ENCODE measurements at regions of chr3 and their contacts with region 1.

Region 1: GRCh38 chr3:4466741-4467521 is at the start of gene SUMF1:
- DNase-seq: peak; percentile 72 to 84
- ATAC-seq: peak; percentile 94 to 99 (median 94)
- H3K4me3 ChIP-seq: peak within 1 kb of the TSS; percentile 84
- H3K4me3 Mint-ChIP-seq: peak within 1 kb of the TSS; percentile 87
- H3K27ac ChIP-seq: peak within 1 kb of the TSS; percentile 71
- H3K27ac Mint-ChIP-seq: peak within 1 kb of the TSS; percentile 78 to 89
- H3K4me1 ChIP-seq: peaks cover 8% of the 10 kb centered on the region
- H3K4me1 Mint-ChIP-seq: peaks cover 14 to 22% of the 10 kb centered on the region in 2 donors
- H3K27me3 ChIP-seq: no peaks in the 10 kb centered on the region
- H3K27me3 Mint-ChIP-seq: peaks cover 1% of the 10 kb centered on the region in 2 donors
- CTCF ChIP-seq: no peak
- total RNA-seq, gene SUMF1: 16.3 to 19.8 (median 19.3) TPM

Region 2: GRCh38 chr3:3860235-3860634 is 606.7 kb before region 1 on chr3:
- intact Hi-C with region 1: no loop called
- DNase-seq: no peak
- ATAC-seq: no peak
- H3K4me3 ChIP-seq: no peak overlapping the region
- H3K4me3 Mint-ChIP-seq: no peak overlapping the region
- H3K27ac ChIP-seq: no peak overlapping the region
- H3K27ac Mint-ChIP-seq: no peak overlapping the region
- H3K4me1 ChIP-seq: no peaks in the 10 kb centered on the region
- H3K4me1 Mint-ChIP-seq: no peaks in the 10 kb centered on the region
- H3K27me3 ChIP-seq: no peaks in the 10 kb centered on the region
- H3K27me3 Mint-ChIP-seq: no peaks in the 10 kb centered on the region
- CTCF ChIP-seq: no peak

Region 3: DNA sequence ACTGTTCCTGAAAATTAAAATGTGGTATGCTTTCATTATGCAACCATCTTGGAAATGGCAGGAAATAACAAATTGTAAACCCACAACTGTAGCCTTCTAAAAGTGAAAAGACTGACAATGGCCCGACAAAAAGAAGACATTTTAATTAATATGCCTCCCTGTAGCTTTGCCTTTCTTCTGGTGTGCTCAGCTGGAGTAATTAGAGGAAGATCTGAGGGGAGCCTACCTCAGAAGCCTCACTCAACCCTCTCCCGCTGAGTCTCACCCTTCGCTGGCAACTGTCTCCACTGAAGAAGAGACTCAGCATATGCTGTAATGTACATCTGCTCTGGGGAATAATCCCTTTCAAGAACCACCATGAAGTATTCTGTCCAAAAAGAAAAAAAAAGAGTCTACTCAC is 268.4 kb before region 1 on chr3:
- intact Hi-C with region 1: no loop called
- DNase-seq: no peak
- ATAC-seq: no peak
- H3K4me3 ChIP-seq: no peak overlapping the region
- H3K4me3 Mint-ChIP-seq: no peak overlapping the region
- H3K27ac ChIP-seq: no peak overlapping the region
- H3K27ac Mint-ChIP-seq: no peak overlapping the region
- H3K4me1 ChIP-seq: no peaks in the 10 kb centered on the region
- H3K4me1 Mint-ChIP-seq: no peaks in the 10 kb centered on the region
- H3K27me3 ChIP-seq: no peaks in the 10 kb centered on the region
- H3K27me3 Mint-ChIP-seq: no peaks in the 10 kb centered on the region
- CTCF ChIP-seq: no peak

Region 4: DNA sequence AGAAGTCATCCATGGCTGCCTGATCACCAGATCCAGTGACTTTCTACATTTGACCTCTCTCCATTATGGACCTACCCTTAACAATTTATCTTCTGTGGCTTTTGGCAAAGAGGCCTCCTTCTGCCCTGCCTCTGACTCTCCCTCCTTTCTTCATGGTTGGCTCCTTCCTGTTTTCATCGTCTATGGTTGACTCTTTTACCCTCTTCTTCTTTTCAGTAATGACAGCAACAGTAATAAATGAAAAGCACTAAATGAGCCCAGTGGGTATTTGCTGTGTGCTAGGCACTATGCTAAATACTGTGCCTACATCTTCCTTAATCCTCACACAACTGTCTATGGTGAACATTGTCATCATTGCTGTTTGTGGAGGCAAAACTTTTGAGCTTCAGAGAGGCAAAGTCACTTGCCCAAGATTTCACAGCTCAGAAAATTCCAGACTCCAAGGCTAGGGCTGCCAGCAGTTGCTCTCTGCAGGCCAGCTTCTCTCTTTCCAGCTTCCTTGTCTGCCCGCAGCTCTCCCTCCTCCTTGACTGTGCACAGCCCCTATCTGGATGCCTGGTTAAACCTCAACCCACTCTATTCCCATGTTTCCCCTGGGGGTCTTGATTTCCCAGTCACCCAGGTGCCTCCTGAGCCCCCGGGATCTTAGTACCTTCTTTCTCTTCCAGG is 50.8 kb after region 1 on chr3:
- intact Hi-C with region 1: loop called (anchors 2 kb)
- DNase-seq: no peak
- ATAC-seq: no peak
- H3K4me3 ChIP-seq: no peak overlapping the region
- H3K4me3 Mint-ChIP-seq: no peak overlapping the region
- H3K27ac ChIP-seq: peak overlapping the region; percentile 51
- H3K27ac Mint-ChIP-seq: peak overlapping the region; percentile 75 to 90
- H3K4me1 ChIP-seq: peaks cover 18% of the 10 kb centered on the region
- H3K4me1 Mint-ChIP-seq: peaks cover 24 to 31% of the 10 kb centered on the region in 2 donors
- H3K27me3 ChIP-seq: no peaks in the 10 kb centered on the region
- H3K27me3 Mint-ChIP-seq: no peaks in the 10 kb centered on the region
- CTCF ChIP-seq: no peak

Region 5: DNA sequence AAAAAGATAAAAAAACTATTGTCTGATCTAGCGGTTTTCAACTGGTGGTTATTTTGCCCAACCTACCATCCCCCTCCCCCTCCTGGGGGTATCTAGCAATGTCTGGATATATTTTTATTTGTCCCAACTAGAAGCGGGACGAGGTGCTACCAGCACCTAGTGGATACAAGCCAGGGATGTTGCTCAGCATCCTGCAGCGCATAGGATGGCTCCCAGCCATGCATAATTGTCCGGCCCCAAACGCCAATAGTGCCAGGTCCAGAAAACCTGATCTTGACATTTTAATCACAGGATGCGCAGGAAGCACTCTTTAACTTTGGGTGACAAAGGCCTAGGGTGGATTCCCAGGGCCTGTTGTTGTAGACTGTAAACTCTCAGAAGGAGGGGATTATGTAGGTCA is 638.1 kb after region 1 on chr3:
- intact Hi-C with region 1: no loop called
- DNase-seq: no peak
- ATAC-seq: no peak
- H3K4me3 ChIP-seq: no peak overlapping the region
- H3K4me3 Mint-ChIP-seq: no peak overlapping the region
- H3K27ac ChIP-seq: no peak overlapping the region
- H3K27ac Mint-ChIP-seq: no peak overlapping the region
- H3K4me1 ChIP-seq: no peaks in the 10 kb centered on the region
- H3K4me1 Mint-ChIP-seq: no peaks in the 10 kb centered on the region
- H3K27me3 ChIP-seq: no peaks in the 10 kb centered on the region
- H3K27me3 Mint-ChIP-seq: peaks cover 0 to 7% of the 10 kb centered on the region in 2 donors
- CTCF ChIP-seq: no peak